B cell (primary cell): ENCODE measurements at regions of chr13 and their contacts with region 1.

Region 1: DNA sequence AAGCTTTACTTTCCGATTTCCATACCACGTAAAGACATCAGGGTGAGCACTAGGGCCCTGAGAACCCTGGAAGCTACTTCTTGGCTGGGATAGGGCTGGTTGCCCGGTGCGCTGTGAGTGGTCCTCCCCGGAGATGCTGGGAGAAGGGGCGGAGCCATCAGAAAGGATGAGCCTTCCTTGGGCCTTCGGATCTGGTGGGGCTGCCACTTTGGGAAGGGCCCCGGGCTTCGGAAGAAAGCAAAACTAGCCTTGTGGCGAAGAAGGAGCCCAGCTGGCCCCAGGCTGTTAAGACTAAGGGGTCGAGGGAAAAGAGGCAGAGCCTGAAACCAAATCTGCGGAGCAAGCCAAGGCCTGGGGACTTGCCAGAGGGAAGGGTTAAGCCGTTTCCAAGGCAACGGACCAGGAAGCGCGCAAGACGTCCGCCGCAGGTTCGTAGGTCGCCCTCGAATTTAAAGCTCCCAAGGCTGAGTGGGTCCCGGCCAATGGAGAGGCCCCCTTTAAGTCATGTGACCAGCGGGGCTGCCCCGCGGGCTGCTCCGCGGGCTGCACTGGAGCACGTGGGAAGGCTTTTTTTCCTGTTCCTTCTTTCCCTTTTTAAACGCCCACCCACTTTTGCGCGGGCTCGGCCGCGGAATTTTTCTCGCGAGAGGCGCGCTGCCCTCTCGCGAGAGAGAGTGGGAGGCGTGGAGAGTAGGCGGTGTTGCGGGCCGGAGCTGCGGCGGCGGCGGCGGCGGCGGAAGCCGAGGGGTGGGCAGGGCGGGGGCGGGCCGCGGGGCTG is 426 bp upstream of the AKAP11 start:
- DNase-seq: peak; percentile 99
- ATAC-seq: peak; percentile 81
- H3K4me3 ChIP-seq: peak overlapping the region; percentile 17 to 78 (median 72)
- H3K4me3 Mint-ChIP-seq: peak overlapping the region; percentile 97
- H3K27ac ChIP-seq: peak overlapping the region; percentile 91 to 96
- H3K27ac Mint-ChIP-seq: peak overlapping the region; percentile 98
- H3K4me1 ChIP-seq: peaks cover 41 to 48% of the 10 kb centered on the region in 2 donors
- H3K4me1 Mint-ChIP-seq: peaks cover 44% of the 10 kb centered on the region
- H3K27me3 ChIP-seq: no peaks in the 10 kb centered on the region
- H3K27me3 Mint-ChIP-seq: no peaks in the 10 kb centered on the region
- CTCF ChIP-seq: no peak

Region 2: DNA sequence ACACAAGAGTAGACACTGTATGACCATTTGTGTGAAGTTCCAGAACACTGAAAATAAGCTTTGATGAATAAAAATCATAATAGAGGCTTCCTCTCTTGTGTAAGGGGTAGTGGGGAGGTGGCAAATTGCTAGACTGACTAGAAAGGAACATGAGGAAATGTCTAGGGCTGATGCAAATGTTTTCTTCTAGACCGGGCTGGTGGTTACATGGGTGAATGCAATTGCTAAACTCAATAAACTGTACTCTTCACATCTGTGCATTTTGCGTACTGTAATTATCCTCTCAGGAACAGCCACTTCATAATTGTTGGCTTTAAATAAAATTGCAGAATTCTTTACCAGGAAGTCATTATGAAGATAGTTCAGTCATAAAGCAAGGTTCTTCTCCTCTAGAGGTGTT is 1072.0 kb before region 1 on chr13:
- CTCF ChIA-PET with region 1: no interaction called
- POLR2A ChIA-PET with region 1: no interaction called
- intact Hi-C with region 1: loop called (anchors 1 kb)
- DNase-seq: peak; percentile 88
- ATAC-seq: peak; percentile 89
- H3K4me3 ChIP-seq: peak overlapping the region in 2 of 5 experiments; percentile 5 to 47
- H3K4me3 Mint-ChIP-seq: peak overlapping the region; percentile 51
- H3K27ac ChIP-seq: peak overlapping the region; percentile 71 to 100
- H3K27ac Mint-ChIP-seq: peak overlapping the region; percentile 98
- H3K4me1 ChIP-seq: peaks cover 35% of the 10 kb centered on the region in 2 donors
- H3K4me1 Mint-ChIP-seq: peaks cover 42% of the 10 kb centered on the region
- H3K27me3 ChIP-seq: no peaks in the 10 kb centered on the region
- H3K27me3 Mint-ChIP-seq: no peaks in the 10 kb centered on the region
- CTCF ChIP-seq: no peak

Region 3: GRCh38 chr13:41465241-41465847 is 806.2 kb before region 1 on chr13:
- CTCF ChIA-PET with region 1: no interaction called
- POLR2A ChIA-PET with region 1: no interaction called
- intact Hi-C with region 1: loop called (anchors 10 kb)
- DNase-seq: peak; percentile 74
- ATAC-seq: peak; percentile 82
- H3K4me3 ChIP-seq: no peak overlapping the region
- H3K4me3 Mint-ChIP-seq: peak overlapping the region; percentile 62
- H3K27ac ChIP-seq: peak overlapping the region; percentile 77 to 80
- H3K27ac Mint-ChIP-seq: peak overlapping the region; percentile 80
- H3K4me1 ChIP-seq: peaks cover 46% of the 10 kb centered on the region in 2 donors
- H3K4me1 Mint-ChIP-seq: peaks cover 50% of the 10 kb centered on the region
- H3K27me3 ChIP-seq: peaks cover 0 to 3% (median 0%) of the 10 kb centered on the region in 4 experiments
- H3K27me3 Mint-ChIP-seq: peaks cover 3% of the 10 kb centered on the region
- CTCF ChIP-seq: no peak

Region 4: DNA sequence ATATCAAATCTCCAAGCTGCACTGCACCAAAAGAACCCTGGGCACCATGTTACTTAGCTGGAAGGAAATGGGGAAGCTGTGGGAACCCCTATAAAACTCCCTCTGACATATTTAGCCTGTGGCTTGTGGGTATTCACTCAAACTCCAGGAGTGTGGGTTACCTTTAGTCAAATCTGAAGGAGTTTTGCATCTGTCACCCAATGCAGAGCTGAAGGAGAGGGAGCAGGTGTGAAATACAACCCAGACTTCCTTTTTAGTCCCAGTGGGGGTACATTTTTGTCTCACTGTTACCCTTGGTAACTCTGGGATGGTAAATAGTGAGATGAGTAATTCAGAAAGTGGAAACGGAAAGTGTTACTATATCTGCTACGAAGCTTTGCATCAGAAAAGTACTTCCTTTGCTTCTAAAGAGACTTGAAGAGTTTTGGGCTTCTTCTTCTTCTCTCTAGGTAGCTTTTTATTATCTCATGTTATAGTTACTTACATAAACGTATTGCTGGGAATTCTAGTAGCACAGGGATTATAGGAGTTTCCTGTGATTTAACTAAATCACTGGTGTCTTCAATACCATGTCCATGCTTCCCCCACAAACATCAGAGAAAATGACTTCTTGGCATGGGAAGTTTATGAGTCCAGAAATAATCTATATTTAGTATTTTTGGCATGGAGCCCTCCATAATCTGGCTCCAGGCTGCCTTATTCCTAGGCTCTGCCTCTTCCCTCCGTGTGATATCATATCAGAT is 106.3 kb after region 1 on chr13:
- CTCF ChIA-PET with region 1: interaction called, 4 read pairs
- POLR2A ChIA-PET with region 1: interaction called, 7 read pairs
- intact Hi-C with region 1: loop called (anchors 1 kb)
- DNase-seq: peak; percentile 95
- ATAC-seq: peak; percentile 83
- H3K4me3 ChIP-seq: peak overlapping the region in 1 of 5 experiments; percentile 35
- H3K4me3 Mint-ChIP-seq: peak overlapping the region; percentile 78
- H3K27ac ChIP-seq: peak overlapping the region; percentile 76 to 79
- H3K27ac Mint-ChIP-seq: peak overlapping the region; percentile 88
- H3K4me1 ChIP-seq: peaks cover 43 to 48% of the 10 kb centered on the region in 2 donors
- H3K4me1 Mint-ChIP-seq: peaks cover 52% of the 10 kb centered on the region
- H3K27me3 ChIP-seq: no peaks in the 10 kb centered on the region
- H3K27me3 Mint-ChIP-seq: no peaks in the 10 kb centered on the region
- CTCF ChIP-seq: no peak

Region 5: GRCh38 chr13:43878892-43879754 is 1607.6 kb after region 1 on chr13 and contains the start of gene CCDC122:
- CTCF ChIA-PET with region 1: no interaction called
- POLR2A ChIA-PET with region 1: no interaction called
- intact Hi-C with region 1: loop called (anchors 5 kb)
- DNase-seq: peak; percentile 89
- ATAC-seq: peak; percentile 79
- H3K4me3 ChIP-seq: peak within 1 kb of the TSS; percentile 36 to 78 (median 75)
- H3K4me3 Mint-ChIP-seq: peak within 1 kb of the TSS; percentile 88
- H3K27ac ChIP-seq: peak within 1 kb of the TSS; percentile 76 to 92
- H3K27ac Mint-ChIP-seq: peak within 1 kb of the TSS; percentile 94
- H3K4me1 ChIP-seq: peaks cover 20 to 22% of the 10 kb centered on the region in 2 donors
- H3K4me1 Mint-ChIP-seq: peaks cover 31% of the 10 kb centered on the region
- H3K27me3 ChIP-seq: no peaks in the 10 kb centered on the region
- H3K27me3 Mint-ChIP-seq: no peaks in the 10 kb centered on the region
- CTCF ChIP-seq: no peak
- total RNA-seq, gene CCDC122: 10.7 and 12.1 TPM in 2 replicates